IMR-90 (cell line): ENCODE measurements at regions of chr2 and their contacts with region 1.

Region 1: GRCh38 chr2:66574701-66575624 is 140.0 kb downstream of the MEIS1 start:
- DNase-seq: peak; percentile 91
- ATAC-seq: peak; percentile 42
- H3K4me3 ChIP-seq: peak overlapping the region; percentile 44
- H3K27ac ChIP-seq: peak overlapping the region; percentile 96
- H3K4me1 ChIP-seq: peaks cover 22% of the 10 kb centered on the region
- H3K27me3 ChIP-seq: no peaks in the 10 kb centered on the region
- CTCF ChIP-seq: peak; percentile 69
- POLR2A ChIP-seq: peak; percentile 56; the same call in 1 of the 2 replicates
- RAD21 ChIP-seq: peak; percentile 71

Region 2: GRCh38 chr2:66445925-66446860 is 128.8 kb before region 1 on chr2:
- CTCF ChIA-PET with region 1: no interaction called
- POLR2A ChIA-PET with region 1: no interaction called
- dilution Hi-C with region 1: no loop called
- in situ Hi-C with region 1: no loop called
- intact Hi-C with region 1: loop called (anchors 2 kb)
- DNase-seq: no peak
- ATAC-seq: peak; percentile 33
- H3K4me3 ChIP-seq: peak overlapping the region; percentile 39
- H3K27ac ChIP-seq: peak overlapping the region; percentile 97
- H3K4me1 ChIP-seq: peaks cover 4% of the 10 kb centered on the region
- H3K27me3 ChIP-seq: no peaks in the 10 kb centered on the region
- CTCF ChIP-seq: peak; percentile 19; the same call in 1 of the 2 replicates
- POLR2A ChIP-seq: peak; percentile 54; the same call in 1 of the 2 replicates
- RAD21 ChIP-seq: no peak

Region 3: GRCh38 chr2:67057901-67058703 is 483.1 kb after region 1 on chr2:
- CTCF ChIA-PET with region 1: no interaction called
- POLR2A ChIA-PET with region 1: no interaction called
- dilution Hi-C with region 1: no loop called
- in situ Hi-C with region 1: no loop called
- intact Hi-C with region 1: loop called (anchors 5 kb)
- DNase-seq: peak; percentile 72
- ATAC-seq: peak; percentile 60
- H3K4me3 ChIP-seq: no peak overlapping the region
- H3K27ac ChIP-seq: no peak overlapping the region
- H3K4me1 ChIP-seq: peaks cover 9% of the 10 kb centered on the region
- H3K27me3 ChIP-seq: no peaks in the 10 kb centered on the region
- CTCF ChIP-seq: no peak
- POLR2A ChIP-seq: no peak
- RAD21 ChIP-seq: no peak

Region 4: DNA sequence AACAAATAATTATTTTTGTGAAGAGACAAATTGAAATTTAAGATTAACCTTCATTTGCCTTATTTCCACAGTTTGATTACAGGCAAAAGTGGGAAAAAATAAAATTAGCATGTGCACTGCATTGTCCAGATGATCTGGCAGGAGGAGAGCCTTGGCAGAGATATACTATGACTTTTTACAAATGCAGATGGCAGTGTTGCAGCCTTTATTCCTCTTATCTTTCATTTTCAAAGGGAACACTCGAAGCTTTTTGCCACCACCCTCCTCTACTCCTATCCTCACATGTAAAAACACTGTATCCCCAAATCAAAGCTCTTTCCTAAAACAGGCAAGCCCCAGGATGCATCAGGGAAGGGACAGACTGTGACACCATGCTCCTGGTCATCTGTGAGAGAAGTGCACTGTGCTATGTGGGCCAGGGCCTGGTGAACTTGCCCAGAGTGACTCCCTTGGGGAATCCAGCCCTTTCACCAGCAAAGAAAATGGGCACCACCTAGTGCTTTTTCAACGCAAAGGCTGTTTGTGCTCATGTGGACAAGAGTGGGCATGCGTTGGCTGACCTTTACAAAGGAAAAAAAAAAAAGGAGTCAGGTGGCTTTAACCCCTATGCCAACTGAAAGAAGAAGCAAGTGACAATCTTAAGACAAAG is 747.5 kb after region 1 on chr2:
- CTCF ChIA-PET with region 1: no interaction called
- POLR2A ChIA-PET with region 1: no interaction called
- dilution Hi-C with region 1: no loop called
- in situ Hi-C with region 1: no loop called
- intact Hi-C with region 1: loop called (anchors 5 kb)
- DNase-seq: peak; percentile 76
- ATAC-seq: peak; percentile 87
- H3K4me3 ChIP-seq: no peak overlapping the region
- H3K27ac ChIP-seq: peak overlapping the region; percentile 47; the same call in 1 of the 2 replicates
- H3K4me1 ChIP-seq: peaks cover 5% of the 10 kb centered on the region
- H3K27me3 ChIP-seq: no peaks in the 10 kb centered on the region
- CTCF ChIP-seq: peak; percentile 57
- POLR2A ChIP-seq: no peak
- RAD21 ChIP-seq: peak; percentile 76

Region 5: GRCh38 chr2:67650291-67651133 is 1075.5 kb after region 1 on chr2:
- CTCF ChIA-PET with region 1: interaction called, 3 read pairs
- POLR2A ChIA-PET with region 1: no interaction called
- dilution Hi-C with region 1: no loop called
- in situ Hi-C with region 1: loop called (anchors 25 kb)
- intact Hi-C with region 1: no loop called
- DNase-seq: peak; percentile 96
- ATAC-seq: peak; percentile 93
- H3K4me3 ChIP-seq: no peak overlapping the region
- H3K27ac ChIP-seq: peak overlapping the region; percentile 61; the same call in 1 of the 2 replicates
- H3K4me1 ChIP-seq: peaks cover 11% of the 10 kb centered on the region
- H3K27me3 ChIP-seq: no peaks in the 10 kb centered on the region
- CTCF ChIP-seq: peak; percentile 93
- POLR2A ChIP-seq: peak; percentile 63; the same call in 1 of the 2 replicates
- RAD21 ChIP-seq: peak; percentile 96